ENCODE measurements at regions of chr5 and their contacts with region 1.

Region 1: DNA sequence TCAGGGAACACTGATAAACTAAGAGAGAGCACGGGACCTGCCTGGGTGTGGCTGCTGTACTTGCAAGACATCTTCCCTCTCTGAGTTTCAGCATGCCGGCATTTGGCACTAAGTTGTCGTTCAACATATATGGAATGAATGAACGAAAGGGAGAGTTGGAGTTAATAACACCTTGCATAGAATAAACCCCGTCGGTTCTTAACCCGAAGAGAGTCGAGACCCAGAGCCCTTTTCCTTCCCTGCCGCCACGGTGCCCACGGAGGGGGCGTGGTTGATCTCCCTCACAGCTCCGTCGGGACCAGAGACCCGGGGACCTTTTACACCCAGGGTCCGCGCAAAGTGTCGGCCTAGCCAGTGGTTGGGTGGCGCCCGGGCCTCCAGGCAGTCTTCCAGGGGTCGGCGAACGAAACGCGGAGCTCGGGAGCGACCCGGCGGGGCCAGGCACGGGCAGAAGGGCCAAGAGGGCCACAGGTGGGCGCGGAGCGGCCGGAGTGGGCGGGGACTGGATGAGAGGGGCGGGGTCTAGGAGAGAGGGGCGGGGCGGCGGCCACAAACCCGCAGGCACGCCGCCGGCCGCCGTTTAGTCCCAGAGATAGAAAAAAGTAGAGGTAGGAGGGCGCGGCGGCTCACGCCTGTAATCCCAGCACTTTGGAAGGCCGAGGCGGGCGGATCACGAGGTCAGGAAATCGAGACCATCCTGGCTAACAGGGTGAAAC is 735 bp upstream of the RPL26L1 start:
- DNase-seq: peak; percentile 53 to 73 (median 64)
- H3K4me3 ChIP-seq: peak overlapping the region; percentile 98
- H3K4me3 Mint-ChIP-seq: peak overlapping the region; percentile 95 to 99 (median 96)
- H3K27ac ChIP-seq: peak overlapping the region; percentile 77
- H3K27ac Mint-ChIP-seq: peak overlapping the region; percentile 96 to 99 (median 98)
- H3K4me1 ChIP-seq: peaks cover 18% of the 10 kb centered on the region
- H3K4me1 Mint-ChIP-seq: peaks cover 33 to 43% (median 43%) of the 10 kb centered on the region in 3 donors
- H3K27me3 ChIP-seq: no peaks in the 10 kb centered on the region
- H3K27me3 Mint-ChIP-seq: peaks cover 0 to 2% of the 10 kb centered on the region in 2 donors

Region 2: DNA sequence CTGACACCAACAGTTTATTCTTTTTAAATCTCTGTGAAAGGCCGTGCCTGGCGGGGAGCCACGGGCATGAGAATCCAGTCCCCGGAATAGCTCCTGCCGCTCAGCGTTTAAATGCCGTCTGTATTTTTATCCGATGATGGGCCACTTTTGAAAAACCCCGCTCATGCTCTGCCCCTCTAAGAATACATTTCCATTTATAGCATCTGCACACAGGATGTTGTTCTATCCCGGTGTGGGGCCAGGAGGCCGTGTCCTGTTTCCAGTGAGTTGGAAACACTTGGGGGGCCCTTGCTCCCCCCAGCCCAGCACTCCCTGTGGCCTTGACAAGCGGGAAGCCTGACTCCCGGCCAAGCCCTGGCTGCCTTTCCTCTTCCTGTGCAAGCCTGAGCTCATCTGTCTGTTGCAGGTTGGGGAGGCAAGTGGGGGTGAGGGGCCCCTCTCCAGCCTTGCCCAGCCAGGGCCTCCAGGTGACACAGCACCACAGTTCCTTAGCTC is 85.4 kb before region 1 on chr5:
- CTCF ChIA-PET with region 1: no interaction called
- POLR2A ChIA-PET with region 1: no interaction called
- DNase-seq: no peak
- H3K4me3 ChIP-seq: no peak overlapping the region
- H3K4me3 Mint-ChIP-seq: no peak overlapping the region
- H3K27ac ChIP-seq: no peak overlapping the region
- H3K27ac Mint-ChIP-seq: peak overlapping the region in 1 of 8 donors; percentile 88
- H3K4me1 ChIP-seq: peaks cover 4% of the 10 kb centered on the region
- H3K4me1 Mint-ChIP-seq: peaks cover 20 to 37% (median 28%) of the 10 kb centered on the region in 3 donors
- H3K27me3 ChIP-seq: no peaks in the 10 kb centered on the region
- H3K27me3 Mint-ChIP-seq: no peaks in the 10 kb centered on the region

Region 3: DNA sequence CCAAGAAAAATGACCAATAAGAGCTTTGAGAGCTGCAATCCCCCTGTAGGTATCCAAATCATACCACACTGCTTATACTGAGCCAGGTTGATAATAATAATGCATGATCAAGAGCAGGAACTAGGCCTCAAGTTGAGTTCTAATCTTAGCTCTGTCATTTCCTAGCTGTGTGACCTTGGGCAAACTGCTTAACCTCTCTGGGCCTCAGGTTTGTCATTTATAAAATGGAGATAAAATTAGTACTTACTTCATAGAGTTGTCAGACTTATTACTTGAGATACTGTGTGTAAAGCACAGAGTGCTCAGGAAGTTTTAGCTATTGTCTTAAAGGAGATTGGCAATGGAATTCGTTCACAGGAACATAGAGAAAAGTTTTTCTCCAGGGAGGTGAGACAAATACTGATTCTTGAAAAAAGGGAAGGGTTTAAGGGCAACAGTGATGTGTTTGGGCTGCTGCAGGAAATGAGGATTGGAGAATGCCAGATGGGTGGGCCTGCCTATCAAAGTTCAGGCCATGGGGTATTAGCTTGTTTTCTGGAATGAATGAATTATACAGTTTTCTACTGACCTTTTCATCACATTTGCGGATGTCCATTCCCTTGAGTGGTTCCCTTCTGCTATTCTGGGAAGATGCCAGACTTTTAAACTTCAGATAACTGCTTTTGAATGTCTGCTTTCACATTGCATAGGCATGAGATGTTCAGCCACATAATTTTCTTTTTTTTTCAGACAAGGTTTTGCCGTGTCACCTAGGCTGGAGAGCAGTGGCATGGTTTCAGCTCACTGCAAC is 14.8 kb after region 1 on chr5:
- CTCF ChIA-PET with region 1: interaction called, 12 read pairs
- POLR2A ChIA-PET with region 1: interaction called, 3 read pairs
- DNase-seq: no peak
- H3K4me3 ChIP-seq: no peak overlapping the region
- H3K4me3 Mint-ChIP-seq: no peak overlapping the region
- H3K27ac ChIP-seq: no peak overlapping the region
- H3K27ac Mint-ChIP-seq: no peak overlapping the region
- H3K4me1 ChIP-seq: no peaks in the 10 kb centered on the region
- H3K4me1 Mint-ChIP-seq: no peaks in the 10 kb centered on the region
- H3K27me3 ChIP-seq: no peaks in the 10 kb centered on the region
- H3K27me3 Mint-ChIP-seq: peaks cover 0 to 12% of the 10 kb centered on the region in 2 donors

Measured in CD8-positive, alpha-beta memory T cell (primary cell).